Naive thymus-derived CD4-positive, alpha-beta T cell (primary cell): ENCODE measurements at regions of chr15 and their contacts with region 1.

Region 1: GRCh38 chr15:76973362-76973743 is 21.6 kb upstream of the PSTPIP1 start:
- DNase-seq: peak in 8 of 9 donors; percentile 26 to 65 (median 52)
- ATAC-seq: peak; percentile 71
- H3K4me3 ChIP-seq: no peak overlapping the region
- H3K4me3 Mint-ChIP-seq: no peak overlapping the region
- H3K27ac ChIP-seq: no peak overlapping the region
- H3K27ac Mint-ChIP-seq: peak overlapping the region in 1 of 9 donors; percentile 36
- H3K4me1 ChIP-seq: no peaks in the 10 kb centered on the region
- H3K4me1 Mint-ChIP-seq: peaks cover 6 to 35% (median 16%) of the 10 kb centered on the region in 7 donors
- H3K27me3 ChIP-seq: no peaks in the 10 kb centered on the region
- H3K27me3 Mint-ChIP-seq: peaks cover 0 to 6% (median 0%) of the 10 kb centered on the region in 5 donors

Region 2: GRCh38 chr15:76756381-76756780 is 217.0 kb before region 1 on chr15:
- CTCF ChIA-PET with region 1: no interaction called
- POLR2A ChIA-PET with region 1: no interaction called
- intact Hi-C with region 1: no loop called
- DNase-seq: no peak
- ATAC-seq: no peak
- H3K4me3 ChIP-seq: no peak overlapping the region
- H3K4me3 Mint-ChIP-seq: no peak overlapping the region
- H3K27ac ChIP-seq: no peak overlapping the region
- H3K27ac Mint-ChIP-seq: no peak overlapping the region
- H3K4me1 ChIP-seq: no peaks in the 10 kb centered on the region
- H3K4me1 Mint-ChIP-seq: peaks cover 0 to 2% (median 0%) of the 10 kb centered on the region in 7 donors
- H3K27me3 ChIP-seq: no peaks in the 10 kb centered on the region
- H3K27me3 Mint-ChIP-seq: no peaks in the 10 kb centered on the region

Region 3: DNA sequence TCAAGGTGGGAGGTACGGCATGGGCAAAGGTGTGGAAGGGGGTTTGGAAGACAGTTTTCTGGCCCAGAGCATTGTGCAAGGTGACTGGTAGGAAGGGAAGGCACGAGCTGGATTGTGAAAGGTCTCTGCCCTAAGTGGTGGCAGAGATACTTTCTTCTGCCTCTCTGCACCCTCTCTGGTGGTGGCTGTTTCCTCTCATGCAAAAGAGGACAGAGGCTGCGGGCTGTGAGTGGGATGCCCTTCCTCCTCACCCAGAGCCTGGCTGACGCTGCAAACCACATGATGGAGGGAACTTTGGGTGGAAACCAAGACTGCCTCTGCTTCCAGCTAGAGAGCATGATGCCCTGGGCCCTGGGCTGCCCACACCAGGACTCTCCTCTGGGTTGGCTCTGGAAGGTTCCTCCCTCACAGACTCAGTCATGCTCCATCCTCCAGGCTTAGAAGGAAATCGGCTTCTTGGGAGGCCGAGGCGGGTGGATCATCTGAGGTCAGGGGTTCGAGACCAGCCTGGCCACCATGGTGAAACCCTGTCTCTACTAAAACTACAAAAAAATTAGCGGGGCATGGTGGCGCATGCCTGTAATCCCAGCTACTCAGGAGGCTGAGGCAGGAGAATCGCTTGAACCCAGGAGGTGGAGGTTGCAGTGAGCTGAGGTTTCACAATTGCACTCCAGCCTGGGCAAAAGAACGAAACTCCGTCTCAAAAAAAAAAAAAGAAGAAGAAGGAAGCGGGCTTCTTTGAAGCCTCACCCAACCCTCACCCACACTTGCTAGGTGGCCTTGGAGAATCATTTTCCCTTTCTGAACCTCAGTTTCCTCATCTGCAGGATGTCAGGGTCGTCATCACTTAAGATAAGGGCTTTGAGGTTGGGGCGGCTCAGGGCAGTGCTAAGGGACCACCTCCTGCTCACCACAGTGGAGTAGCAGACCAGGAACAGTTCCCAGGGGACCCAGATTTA is 29.9 kb after region 1 on chr15:
- CTCF ChIA-PET with region 1: interaction called, 11 read pairs
- POLR2A ChIA-PET with region 1: interaction called, 4 read pairs
- intact Hi-C with region 1: no loop called
- DNase-seq: peak in 8 of 9 donors; percentile 55 to 76 (median 66)
- ATAC-seq: peak; percentile 87
- H3K4me3 ChIP-seq: peak overlapping the region; percentile 28
- H3K4me3 Mint-ChIP-seq: peak overlapping the region; percentile 39 to 85 (median 76)
- H3K27ac ChIP-seq: peak overlapping the region; percentile 72
- H3K27ac Mint-ChIP-seq: peak overlapping the region; percentile 78 to 94 (median 87)
- H3K4me1 ChIP-seq: peaks cover 45 to 77% of the 10 kb centered on the region in 2 donors
- H3K4me1 Mint-ChIP-seq: peaks cover 65 to 89% (median 84%) of the 10 kb centered on the region in 7 donors
- H3K27me3 ChIP-seq: no peaks in the 10 kb centered on the region
- H3K27me3 Mint-ChIP-seq: no peaks in the 10 kb centered on the region

Region 4: DNA sequence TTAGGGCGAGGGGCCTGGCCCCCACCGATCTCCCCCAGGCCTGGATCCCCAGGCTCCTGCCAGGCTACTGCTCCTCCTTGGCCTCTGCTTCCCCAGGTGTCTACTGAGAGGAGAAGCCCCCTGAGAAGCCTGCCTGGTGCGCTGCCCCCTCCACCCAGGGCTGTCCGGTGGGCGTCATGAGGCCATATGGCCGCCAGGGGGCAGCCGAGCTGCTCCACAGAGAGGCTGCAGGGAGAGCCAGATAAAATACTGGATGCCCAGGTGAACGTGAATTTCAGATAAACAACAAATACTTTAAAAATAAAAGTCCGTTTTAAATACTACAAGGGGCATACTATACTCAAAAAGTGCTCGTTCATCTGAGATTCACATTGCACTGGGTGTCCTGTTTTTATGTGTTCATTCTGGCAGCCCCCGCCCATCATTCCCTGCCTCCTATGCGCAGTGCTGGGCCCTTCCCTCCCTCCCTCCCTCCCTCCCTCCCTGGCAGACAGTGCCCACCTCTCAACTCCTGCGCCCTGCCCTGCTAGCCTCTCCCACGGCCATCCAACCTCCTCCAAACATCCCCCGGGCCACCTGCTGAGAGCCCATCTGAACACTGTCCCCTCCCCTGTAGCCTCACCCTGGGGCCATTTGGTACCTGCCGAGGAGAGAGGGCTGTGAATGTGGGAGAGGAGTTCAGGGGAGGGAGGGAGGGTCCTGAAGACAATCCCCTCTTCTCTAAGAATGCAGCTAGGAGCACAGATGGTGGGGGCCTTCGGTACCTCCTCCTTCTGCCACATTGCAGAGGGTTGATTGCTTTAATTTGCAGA is 51.1 kb after region 1 on chr15:
- CTCF ChIA-PET with region 1: interaction called, 18 read pairs
- POLR2A ChIA-PET with region 1: interaction called, 4 read pairs
- intact Hi-C with region 1: loop called (anchors 1 to 2 kb)
- DNase-seq: peak; percentile 35 to 74 (median 61)
- ATAC-seq: peak; percentile 64
- H3K4me3 ChIP-seq: no peak overlapping the region
- H3K4me3 Mint-ChIP-seq: peak overlapping the region in 2 of 10 donors; percentile 19 to 21
- H3K27ac ChIP-seq: peak overlapping the region; percentile 50
- H3K27ac Mint-ChIP-seq: peak overlapping the region in 8 of 9 donors; percentile 36 to 99 (median 86)
- H3K4me1 ChIP-seq: peaks cover 30 to 51% of the 10 kb centered on the region in 2 donors
- H3K4me1 Mint-ChIP-seq: peaks cover 33 to 59% (median 44%) of the 10 kb centered on the region in 7 donors
- H3K27me3 ChIP-seq: no peaks in the 10 kb centered on the region
- H3K27me3 Mint-ChIP-seq: no peaks in the 10 kb centered on the region

Region 5: GRCh38 chr15:77070495-77071304 is 97.3 kb after region 1 on chr15 and contains the start of gene TSPAN3:
- CTCF ChIA-PET with region 1: no interaction called
- POLR2A ChIA-PET with region 1: no interaction called
- intact Hi-C with region 1: loop called in 1 of 2 experiments (anchors 5 kb)
- DNase-seq: peak; percentile 88 to 93 (median 92)
- ATAC-seq: peak; percentile 99
- H3K4me3 ChIP-seq: peak within 1 kb of the TSS; percentile 50
- H3K4me3 Mint-ChIP-seq: peak within 1 kb of the TSS; percentile 81 to 90 (median 86)
- H3K27ac ChIP-seq: peak within 1 kb of the TSS; percentile 62
- H3K27ac Mint-ChIP-seq: peak within 1 kb of the TSS; percentile 54 to 93 (median 80)
- H3K4me1 ChIP-seq: peaks cover 5 to 14% of the 10 kb centered on the region in 2 donors
- H3K4me1 Mint-ChIP-seq: peaks cover 7 to 48% (median 29%) of the 10 kb centered on the region in 7 donors
- H3K27me3 ChIP-seq: peaks cover 0 to 2% of the 10 kb centered on the region in 2 donors
- H3K27me3 Mint-ChIP-seq: peaks cover 0 to 22% (median 0%) of the 10 kb centered on the region in 5 donors
- total RNA-seq, gene TSPAN3: 17.5 to 24.4 (median 21.7) TPM

Region 6: DNA sequence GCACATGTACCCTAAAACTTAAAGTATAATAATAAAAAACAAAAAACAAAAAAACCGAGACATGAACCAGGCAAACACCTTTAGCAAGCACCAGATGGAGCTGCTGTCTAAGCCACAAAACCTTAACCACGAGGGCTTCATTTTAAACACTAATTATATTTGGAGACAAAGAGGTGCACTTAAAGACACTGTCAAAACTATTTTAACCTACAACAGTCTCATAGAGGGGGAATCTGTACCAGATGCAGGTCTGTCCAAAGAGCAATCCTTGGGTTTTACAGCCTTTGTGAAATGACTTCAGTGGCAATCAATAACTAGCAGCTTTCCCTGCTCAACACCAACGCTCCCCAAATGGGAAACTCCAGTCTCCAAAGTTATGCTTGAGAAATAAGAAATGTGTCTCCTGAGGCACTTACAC is 213.2 kb after region 1 on chr15:
- CTCF ChIA-PET with region 1: no interaction called
- POLR2A ChIA-PET with region 1: no interaction called
- intact Hi-C with region 1: loop called in 1 of 2 experiments (anchors 10 kb)
- DNase-seq: peak in 3 of 9 donors; percentile 13 to 30 (median 18)
- ATAC-seq: no peak
- H3K4me3 ChIP-seq: no peak overlapping the region
- H3K4me3 Mint-ChIP-seq: no peak overlapping the region
- H3K27ac ChIP-seq: no peak overlapping the region
- H3K27ac Mint-ChIP-seq: no peak overlapping the region
- H3K4me1 ChIP-seq: peaks cover under 1 to 7% of the 10 kb centered on the region in 2 donors
- H3K4me1 Mint-ChIP-seq: peaks cover 12 to 57% (median 46%) of the 10 kb centered on the region in 7 donors
- H3K27me3 ChIP-seq: no peaks in the 10 kb centered on the region
- H3K27me3 Mint-ChIP-seq: no peaks in the 10 kb centered on the region

Region 7: DNA sequence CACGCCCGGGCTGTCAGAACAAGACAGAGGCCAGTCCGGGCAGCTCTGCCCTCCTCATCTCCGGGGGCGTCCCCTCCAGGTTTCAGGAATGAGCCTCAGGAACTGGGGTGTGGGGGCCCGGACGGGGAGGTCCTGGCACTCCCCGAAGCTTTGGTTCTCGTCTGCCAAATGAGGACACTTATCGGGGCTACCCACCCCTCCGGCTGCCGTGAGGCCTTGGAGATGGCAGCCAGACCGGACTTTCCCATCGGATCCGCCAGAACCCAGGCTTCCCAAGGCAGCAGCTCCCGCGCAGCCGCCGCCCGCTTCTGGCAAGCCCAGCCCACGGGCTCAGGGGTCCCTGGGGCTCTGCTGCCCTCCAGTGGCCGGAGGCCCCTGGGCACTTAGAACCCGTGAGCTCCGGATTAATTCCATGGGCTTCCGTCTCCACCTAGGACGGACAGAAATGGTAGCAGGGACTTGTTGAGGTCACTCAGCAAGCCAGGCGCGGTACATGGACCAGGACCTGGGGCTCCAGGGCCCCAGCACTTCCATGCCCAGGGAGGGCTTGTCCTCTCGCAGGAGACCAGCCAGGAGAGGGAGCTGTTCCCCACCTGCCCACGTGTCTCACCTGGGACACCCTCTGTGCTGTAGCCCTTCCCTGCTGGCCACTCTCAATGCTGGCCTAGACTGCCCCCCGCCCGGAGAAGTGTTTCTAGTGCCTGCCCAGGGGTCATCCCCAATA is 570.0 kb after region 1 on chr15:
- CTCF ChIA-PET with region 1: interaction called, 7 read pairs
- POLR2A ChIA-PET with region 1: no interaction called
- intact Hi-C with region 1: loop called (anchors 1 kb)
- DNase-seq: peak; percentile 49 to 82 (median 71)
- ATAC-seq: peak; percentile 89
- H3K4me3 ChIP-seq: peak overlapping the region; percentile 80
- H3K4me3 Mint-ChIP-seq: peak overlapping the region; percentile 71 to 83 (median 78)
- H3K27ac ChIP-seq: peak overlapping the region; percentile 30
- H3K27ac Mint-ChIP-seq: peak overlapping the region in 6 of 9 donors; percentile 38 to 69 (median 48)
- H3K4me1 ChIP-seq: peaks cover 6% of the 10 kb centered on the region in 2 donors
- H3K4me1 Mint-ChIP-seq: peaks cover 0 to 12% (median 6%) of the 10 kb centered on the region in 7 donors
- H3K27me3 ChIP-seq: no peaks in the 10 kb centered on the region
- H3K27me3 Mint-ChIP-seq: peaks cover 0 to 12% (median 4%) of the 10 kb centered on the region in 5 donors